ENCODE measurements at regions of chr3 and their contacts with region 1.

Region 1: DNA sequence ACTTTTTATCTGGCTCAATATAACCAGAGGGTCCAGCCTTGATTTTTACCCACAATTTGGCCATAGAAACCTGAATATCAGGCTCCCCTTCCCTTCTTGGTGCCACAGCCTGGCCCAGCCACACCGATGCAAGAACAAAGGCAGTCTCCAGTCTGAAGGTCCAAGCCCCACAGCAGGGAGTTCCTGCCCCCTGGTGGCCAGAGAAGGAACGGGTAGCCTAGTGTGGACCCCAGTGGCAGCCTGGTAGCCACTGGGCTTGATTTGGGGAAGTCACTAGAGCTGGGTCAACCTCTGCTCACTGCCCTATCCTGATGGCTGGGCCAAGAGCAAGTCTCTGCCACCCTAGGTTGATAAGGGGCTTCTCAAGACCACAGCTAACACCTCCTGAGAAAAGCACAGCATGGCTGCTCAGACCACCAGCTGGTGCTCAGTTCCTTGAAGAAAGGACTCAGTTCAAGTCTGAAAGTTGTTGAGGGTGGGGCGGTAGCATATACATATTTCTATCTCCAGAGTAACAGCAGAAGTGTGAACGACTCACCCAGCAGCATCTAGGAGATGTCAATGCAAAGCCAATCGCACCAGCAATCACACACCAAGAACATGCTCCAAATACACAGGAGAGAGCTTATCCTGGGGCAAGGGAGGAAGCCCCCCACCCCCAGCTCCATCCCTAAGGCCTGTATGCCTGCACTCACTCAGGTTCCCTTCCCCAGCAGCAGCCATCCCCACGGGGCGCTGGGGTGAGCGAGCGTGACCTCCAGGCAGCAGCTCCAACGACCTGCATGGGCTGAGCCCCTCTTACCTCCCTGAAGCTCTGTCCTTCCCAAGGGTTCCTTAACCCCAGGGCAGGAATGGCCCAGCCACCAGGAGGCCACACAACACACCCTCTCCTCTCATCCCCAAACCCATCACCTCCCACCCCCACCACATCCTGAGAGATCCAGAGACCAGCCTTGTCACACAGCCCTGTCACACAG is 7.6 kb downstream of the PFKFB4 start:
- DNase-seq: no peak
- H3K4me3 ChIP-seq: no peak overlapping the region
- H3K27me3 ChIP-seq: no peaks in the 10 kb centered on the region
- CTCF ChIP-seq: peak; percentile 96

Region 2: DNA sequence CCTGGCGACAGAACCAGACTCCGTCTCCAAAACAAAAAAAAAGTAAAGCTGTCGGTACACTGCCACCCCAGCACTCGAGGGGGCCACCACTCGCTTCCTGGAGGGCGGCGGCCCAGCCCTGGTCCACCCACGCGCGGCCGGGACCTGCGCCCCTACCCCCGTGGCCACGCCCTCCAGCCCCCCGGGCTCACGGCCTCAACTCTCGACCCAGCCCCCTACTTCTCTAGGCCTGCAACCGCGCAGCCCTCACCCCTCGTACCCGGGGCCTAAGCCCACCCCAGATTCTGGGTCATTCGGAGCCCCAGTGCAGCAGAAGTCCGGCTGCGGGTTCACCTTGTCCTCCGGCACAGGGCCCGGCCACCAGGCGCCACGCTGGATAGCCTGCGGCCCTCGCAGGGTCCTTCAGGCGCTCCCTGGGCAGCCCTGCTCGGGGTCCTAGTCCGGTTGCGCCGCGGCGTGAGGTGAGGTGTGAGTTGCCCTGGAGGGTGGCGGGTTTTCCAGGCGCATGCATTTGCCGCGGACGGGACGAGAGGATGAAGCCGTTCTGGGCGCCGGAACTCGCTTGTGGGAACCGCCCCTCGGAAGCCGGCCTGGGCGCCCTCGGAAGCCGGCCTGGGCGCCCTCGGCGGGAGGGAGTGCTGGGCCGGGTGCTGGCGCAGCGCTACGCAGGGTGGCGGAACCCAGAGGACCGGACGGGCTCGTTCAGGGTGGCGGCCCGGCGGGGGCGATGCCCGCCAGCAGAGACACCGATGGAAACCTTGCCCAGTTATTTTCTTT is 247.8 kb before region 1 on chr3:
- CTCF ChIA-PET with region 1: no interaction called
- POLR2A ChIA-PET with region 1: no interaction called
- DNase-seq: peak; percentile 37
- H3K4me3 ChIP-seq: peak within 1 kb of the TSS; percentile 93
- H3K27me3 ChIP-seq: no peaks in the 10 kb centered on the region; the same call in 1 of the 2 replicates
- CTCF ChIP-seq: no peak

Region 3: GRCh38 chr3:48465531-48466378 is 83.3 kb before region 1 on chr3:
- CTCF ChIA-PET with region 1: interaction called, 25 read pairs
- POLR2A ChIA-PET with region 1: interaction called, 4 read pairs
- DNase-seq: peak; percentile 99
- H3K4me3 ChIP-seq: peak overlapping the region; percentile 49
- H3K27me3 ChIP-seq: no peaks in the 10 kb centered on the region
- CTCF ChIP-seq: peak; percentile 78

Region 4: GRCh38 chr3:48472915-48473616 is 76.0 kb before region 1 on chr3:
- CTCF ChIA-PET with region 1: interaction called, 10 read pairs
- POLR2A ChIA-PET with region 1: no interaction called
- DNase-seq: peak; percentile 65
- H3K4me3 ChIP-seq: peak overlapping the region; percentile 72
- H3K27me3 ChIP-seq: no peaks in the 10 kb centered on the region
- CTCF ChIP-seq: peak; percentile 44

Region 5: DNA sequence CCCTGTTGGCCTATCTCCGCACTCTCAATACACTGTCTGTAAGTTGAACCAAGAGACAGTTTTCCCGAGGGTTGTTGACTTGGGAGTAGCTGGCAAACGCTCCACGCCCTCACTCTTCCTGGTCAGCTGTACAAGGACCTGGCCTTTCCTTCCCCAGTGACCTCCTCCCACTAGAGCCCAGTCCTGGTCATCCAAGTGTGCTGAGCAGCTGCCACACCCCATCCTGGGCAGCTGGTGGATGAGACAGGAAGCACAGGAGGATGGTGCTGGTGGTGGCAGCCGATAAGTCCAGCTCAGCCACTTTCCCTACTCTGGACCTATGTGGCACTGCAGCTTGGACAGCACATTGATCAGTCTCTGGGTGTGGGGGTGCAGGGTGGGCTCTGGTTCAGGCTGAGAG is 12.2 kb before region 1 on chr3:
- CTCF ChIA-PET with region 1: interaction called, 13 read pairs
- POLR2A ChIA-PET with region 1: no interaction called
- DNase-seq: no peak
- H3K4me3 ChIP-seq: no peak overlapping the region
- H3K27me3 ChIP-seq: no peaks in the 10 kb centered on the region
- CTCF ChIP-seq: no peak

Measured in BJ (cell line).